Sciatic nerve (tissue), 2 donors: ENCODE measurements at regions of chr7 and their contacts with region 1.

Region 1: DNA sequence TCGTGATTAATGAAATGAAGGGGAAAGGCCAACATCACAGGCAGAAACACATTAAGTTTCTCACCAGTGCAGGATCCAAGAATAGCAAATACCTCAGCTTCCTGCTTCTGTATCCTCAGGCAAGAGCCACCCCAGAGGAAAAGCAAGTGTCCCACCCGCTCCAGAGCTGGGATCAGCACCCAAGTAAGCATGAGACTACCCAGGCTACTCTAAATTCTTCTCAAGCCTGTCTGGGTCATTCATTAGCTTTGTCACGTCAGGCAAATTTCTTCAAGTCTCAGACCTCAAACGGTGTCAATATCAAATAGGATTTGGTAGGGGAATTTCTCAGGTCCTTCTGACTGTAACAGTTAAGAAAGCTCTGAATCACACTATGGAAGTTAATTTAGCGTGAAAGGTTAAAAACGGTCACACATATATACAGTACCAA is 59.0 kb downstream of the GNA12 start:
- DNase-seq: no peak
- ATAC-seq: peak; percentile 37

Region 2: DNA sequence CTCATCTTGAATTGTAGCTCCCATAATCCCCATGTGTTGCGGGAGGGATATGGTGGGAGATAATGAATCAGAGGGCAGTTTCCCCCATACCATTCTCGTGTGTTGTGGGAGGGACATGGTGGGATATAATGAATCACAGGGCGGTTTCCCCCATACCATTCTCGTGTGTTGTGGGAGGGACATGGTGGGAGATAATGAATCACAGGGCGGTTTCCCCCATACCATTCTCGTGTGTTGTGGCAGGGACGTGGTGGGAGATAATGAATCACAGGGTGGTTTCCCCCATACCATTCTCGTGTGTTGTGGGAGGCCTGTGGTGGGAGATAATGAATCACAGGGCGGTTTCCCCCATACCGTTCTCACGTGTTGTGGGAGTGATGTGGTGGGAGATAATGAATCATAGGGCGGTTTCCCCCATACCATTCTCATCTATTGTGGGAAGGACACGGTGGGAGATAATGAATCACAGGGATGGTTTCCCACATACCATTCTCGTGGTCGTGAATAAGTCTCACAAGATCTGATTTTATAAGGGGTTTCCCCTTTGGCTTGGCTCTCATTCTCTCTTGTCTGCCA is 823.3 kb before region 1 on chr7:
- intact Hi-C with region 1: no loop called
- DNase-seq: no peak
- ATAC-seq: no peak

Region 3: GRCh38 chr7:4074994-4075393 is 1289.9 kb after region 1 on chr7:
- intact Hi-C with region 1: loop called (anchors 10 kb)
- DNase-seq: no peak
- ATAC-seq: no peak